T-cell (primary cell): ENCODE measurements at regions of chrX and their contacts with region 1.

Region 1: GRCh38 chrX:9897761-9898161 is 69.4 kb upstream of the CLDN34 start:
- DNase-seq: no peak
- ATAC-seq: no peak
- H3K4me3 ChIP-seq: no peak overlapping the region
- H3K4me3 Mint-ChIP-seq: no peak overlapping the region
- H3K27ac ChIP-seq: no peak overlapping the region
- H3K27ac Mint-ChIP-seq: no peak overlapping the region
- H3K4me1 ChIP-seq: no peaks in the 10 kb centered on the region
- H3K4me1 Mint-ChIP-seq: peaks cover 0 to 15% (median 2%) of the 10 kb centered on the region in 3 donors
- H3K27me3 ChIP-seq: peaks cover 0 to 3% of the 10 kb centered on the region in 2 experiments
- H3K27me3 Mint-ChIP-seq: peaks cover 5 to 11% of the 10 kb centered on the region in 2 donors

Region 2: GRCh38 chrX:9865804-9866471 is 31.8 kb before region 1 on chrX:
- CTCF ChIA-PET with region 1: no interaction called
- POLR2A ChIA-PET with region 1: no interaction called
- DNase-seq: no peak
- ATAC-seq: no peak
- H3K4me3 ChIP-seq: no peak overlapping the region
- H3K4me3 Mint-ChIP-seq: no peak overlapping the region
- H3K27ac ChIP-seq: no peak overlapping the region
- H3K27ac Mint-ChIP-seq: no peak overlapping the region
- H3K4me1 ChIP-seq: no peaks in the 10 kb centered on the region
- H3K4me1 Mint-ChIP-seq: peaks cover 0 to 4% (median 0%) of the 10 kb centered on the region in 3 donors
- H3K27me3 ChIP-seq: peaks cover 0 to 6% of the 10 kb centered on the region in 2 experiments
- H3K27me3 Mint-ChIP-seq: peaks cover 26 to 31% of the 10 kb centered on the region in 2 donors

Region 3: GRCh38 chrX:9948406-9948805 is 50.6 kb after region 1 on chrX:
- CTCF ChIA-PET with region 1: interaction called in 1 of 2 experiments, 10 read pairs
- POLR2A ChIA-PET with region 1: no interaction called
- DNase-seq: no peak
- ATAC-seq: no peak
- H3K4me3 ChIP-seq: no peak overlapping the region
- H3K4me3 Mint-ChIP-seq: no peak overlapping the region
- H3K27ac ChIP-seq: no peak overlapping the region
- H3K27ac Mint-ChIP-seq: no peak overlapping the region
- H3K4me1 ChIP-seq: no peaks in the 10 kb centered on the region
- H3K4me1 Mint-ChIP-seq: peaks cover 0 to under 1% (median 0%) of the 10 kb centered on the region in 3 donors
- H3K27me3 ChIP-seq: peaks cover 0 to 9% of the 10 kb centered on the region in 2 experiments
- H3K27me3 Mint-ChIP-seq: peaks cover 10 to 14% of the 10 kb centered on the region in 2 donors

Region 4: GRCh38 chrX:10288384-10288975 is 390.7 kb after region 1 on chrX:
- CTCF ChIA-PET with region 1: no interaction called
- POLR2A ChIA-PET with region 1: no interaction called
- DNase-seq: no peak
- ATAC-seq: no peak
- H3K4me3 ChIP-seq: no peak overlapping the region
- H3K4me3 Mint-ChIP-seq: no peak overlapping the region
- H3K27ac ChIP-seq: no peak overlapping the region
- H3K27ac Mint-ChIP-seq: no peak overlapping the region
- H3K4me1 ChIP-seq: no peaks in the 10 kb centered on the region
- H3K4me1 Mint-ChIP-seq: no peaks in the 10 kb centered on the region
- H3K27me3 ChIP-seq: no peaks in the 10 kb centered on the region
- H3K27me3 Mint-ChIP-seq: peaks cover 0 to 12% of the 10 kb centered on the region in 2 donors